ENCODE measurements at regions of chr12 and their contacts with region 1.

Region 1: DNA sequence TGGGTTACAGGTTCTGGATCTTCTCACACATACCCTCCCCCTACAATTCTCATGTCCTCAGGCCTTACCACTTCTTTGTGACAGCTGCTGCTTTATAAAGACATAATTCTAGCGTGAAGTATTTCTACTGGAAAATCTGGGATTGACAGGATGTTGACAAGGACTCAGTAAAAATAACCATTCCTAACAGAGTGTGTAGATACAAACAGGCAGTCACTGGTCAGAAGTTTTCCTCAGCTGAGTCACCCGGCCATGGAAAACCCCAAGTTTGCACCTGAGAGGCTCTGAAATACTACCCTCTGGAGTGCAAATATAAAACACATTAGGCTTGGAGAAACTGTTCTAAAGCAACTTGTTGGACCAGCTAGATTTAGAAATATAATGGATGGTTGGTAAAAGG is 54.4 kb downstream of the SPPL3 start:
- DNase-seq: no peak
- ATAC-seq: no peak
- H3K4me3 Mint-ChIP-seq: peak overlapping the region; percentile 52
- H3K27ac Mint-ChIP-seq: peak overlapping the region; percentile 77
- H3K4me1 Mint-ChIP-seq: peaks cover 73% of the 10 kb centered on the region
- H3K27me3 Mint-ChIP-seq: no peaks in the 10 kb centered on the region
- CTCF ChIP-seq: no peak

Region 2: DNA sequence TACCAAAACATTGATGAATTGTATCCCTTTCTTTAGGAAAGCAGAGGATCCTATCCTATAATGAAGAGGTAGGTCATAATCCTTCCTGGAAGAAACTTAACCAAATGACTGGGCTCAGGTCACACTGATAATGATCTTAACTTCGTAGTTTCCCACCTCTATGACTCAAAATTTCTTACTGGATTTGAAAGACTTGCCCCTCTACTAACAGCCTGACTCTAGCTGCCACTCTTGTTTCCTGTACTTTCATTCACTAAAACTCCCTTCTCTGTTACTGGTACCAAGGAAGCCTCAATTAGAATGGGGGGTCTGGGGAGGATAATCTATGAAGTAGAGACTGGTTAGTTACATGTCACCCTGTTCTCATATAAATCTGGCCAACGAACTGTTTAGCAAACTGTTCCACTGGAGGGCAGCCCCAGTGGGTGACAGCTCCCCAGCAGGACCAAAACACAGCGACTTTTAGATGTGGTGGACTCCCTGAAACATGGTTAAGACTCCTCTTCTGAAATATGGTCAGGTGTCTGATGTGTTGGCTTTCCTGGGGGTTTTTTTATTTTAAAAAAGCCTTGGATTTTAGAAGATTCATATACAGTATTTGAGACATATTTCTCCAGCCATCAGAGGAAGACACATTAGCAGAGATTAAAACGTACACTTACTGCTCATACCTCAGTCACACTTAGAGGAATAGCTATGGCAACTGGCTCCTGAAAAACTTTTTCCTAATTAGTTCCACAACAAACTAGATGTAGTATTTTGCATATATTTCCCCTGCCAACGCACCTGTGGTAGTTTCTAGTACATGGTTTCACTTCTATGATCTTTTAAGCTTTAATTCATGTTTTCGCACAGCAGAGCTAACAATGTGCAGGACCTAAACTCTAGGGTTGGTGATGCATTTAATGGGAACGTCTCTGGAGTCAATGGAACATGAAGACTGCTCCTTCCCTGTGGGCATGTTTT is 51.8 kb before region 1 on chr12:
- CTCF ChIA-PET with region 1: no interaction called
- POLR2A ChIA-PET with region 1: interaction called, 9 read pairs
- intact Hi-C with region 1: loop called (anchors 5 kb)
- DNase-seq: no peak
- ATAC-seq: peak; percentile 53
- H3K4me3 Mint-ChIP-seq: peak overlapping the region; percentile 36
- H3K27ac Mint-ChIP-seq: peak overlapping the region; percentile 27
- H3K4me1 Mint-ChIP-seq: peaks cover 54% of the 10 kb centered on the region
- H3K27me3 Mint-ChIP-seq: no peaks in the 10 kb centered on the region
- CTCF ChIP-seq: no peak

Measured in activated B cell treated with CpG ODN at 0.5 μM for 24 hours (primary cell).